MCF 10A (cell line): ENCODE measurements at regions of chr7 and their contacts with region 1.

Region 1: GRCh38 chr7:110204527-110204926 is 886.4 kb upstream of the LRRN3 start:
- DNase-seq: peak; percentile 30
- H3K4me3 Mint-ChIP-seq: no peak overlapping the region
- H3K27ac Mint-ChIP-seq: no peak overlapping the region
- H3K4me1 Mint-ChIP-seq: no peaks in the 10 kb centered on the region
- H3K27me3 Mint-ChIP-seq: no peaks in the 10 kb centered on the region
- CTCF ChIP-seq: no peak

Region 2: GRCh38 chr7:110090110-110090769 is 114.3 kb before region 1 on chr7:
- CTCF ChIA-PET with region 1: interaction called, 10 read pairs
- POLR2A ChIA-PET with region 1: no interaction called
- intact Hi-C with region 1: no loop called
- DNase-seq: peak; percentile 56
- H3K4me3 Mint-ChIP-seq: no peak overlapping the region
- H3K27ac Mint-ChIP-seq: no peak overlapping the region
- H3K4me1 Mint-ChIP-seq: no peaks in the 10 kb centered on the region
- H3K27me3 Mint-ChIP-seq: no peaks in the 10 kb centered on the region
- CTCF ChIP-seq: peak; percentile 60

Region 3: DNA sequence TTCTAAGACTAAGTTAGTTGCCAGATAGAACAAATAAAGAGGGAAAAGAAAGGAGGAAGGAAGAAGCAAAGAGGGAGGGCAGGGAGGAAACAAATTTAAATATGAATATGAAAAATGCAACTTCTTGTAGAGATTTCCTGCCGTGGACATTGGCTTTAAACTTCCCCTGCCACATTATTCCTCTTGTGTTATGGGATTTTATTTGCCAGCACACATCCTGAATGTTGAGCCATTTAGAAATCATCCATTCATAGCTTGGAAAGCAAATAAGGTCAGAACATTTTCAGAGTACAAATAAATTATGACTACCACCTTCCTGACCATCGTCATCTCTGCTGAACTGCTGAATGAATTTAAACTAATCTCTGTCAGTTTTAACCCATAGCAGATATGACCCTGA is 25.5 kb before region 1 on chr7:
- CTCF ChIA-PET with region 1: no interaction called
- POLR2A ChIA-PET with region 1: no interaction called
- intact Hi-C with region 1: no loop called
- DNase-seq: no peak
- H3K4me3 Mint-ChIP-seq: no peak overlapping the region
- H3K27ac Mint-ChIP-seq: no peak overlapping the region
- H3K4me1 Mint-ChIP-seq: no peaks in the 10 kb centered on the region
- H3K27me3 Mint-ChIP-seq: no peaks in the 10 kb centered on the region
- CTCF ChIP-seq: no peak

Region 4: GRCh38 chr7:110407708-110408107 is 203.2 kb after region 1 on chr7:
- CTCF ChIA-PET with region 1: no interaction called
- POLR2A ChIA-PET with region 1: no interaction called
- intact Hi-C with region 1: no loop called
- DNase-seq: peak; percentile 26
- H3K4me3 Mint-ChIP-seq: no peak overlapping the region
- H3K27ac Mint-ChIP-seq: no peak overlapping the region
- H3K4me1 Mint-ChIP-seq: peaks cover 9% of the 10 kb centered on the region
- H3K27me3 Mint-ChIP-seq: no peaks in the 10 kb centered on the region
- CTCF ChIP-seq: no peak